ENCODE measurements at regions of chr16 and their contacts with region 1.

Region 1: DNA sequence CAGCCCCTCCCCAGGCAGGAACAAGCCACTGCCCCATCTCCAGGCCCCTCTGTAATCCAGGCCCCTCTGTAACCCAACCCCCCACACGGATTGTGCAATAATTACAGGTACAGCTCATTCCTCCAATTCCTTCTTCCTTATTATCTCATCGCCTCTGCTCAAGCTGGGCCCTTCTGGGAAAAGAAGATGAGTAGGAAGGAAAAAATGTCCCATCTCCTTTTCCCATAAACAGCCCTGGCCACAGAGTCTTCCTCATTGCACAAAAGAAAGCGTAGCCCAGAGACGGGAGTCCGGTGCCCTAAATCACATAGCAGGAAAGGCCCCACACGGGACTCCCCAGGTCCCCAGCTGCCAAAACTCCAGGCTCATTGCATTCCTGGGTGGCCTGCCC is 3.6 kb upstream of the LITAFD start:
- DNase-seq: no peak
- ATAC-seq: no peak
- H3K4me3 ChIP-seq: no peak overlapping the region
- H3K4me3 Mint-ChIP-seq: no peak overlapping the region
- H3K27ac ChIP-seq: no peak overlapping the region
- H3K27ac Mint-ChIP-seq: no peak overlapping the region
- H3K4me1 ChIP-seq: peaks cover 9% of the 10 kb centered on the region
- H3K4me1 Mint-ChIP-seq: peaks cover 19% of the 10 kb centered on the region
- H3K27me3 ChIP-seq: no peaks in the 10 kb centered on the region
- H3K27me3 Mint-ChIP-seq: no peaks in the 10 kb centered on the region
- CTCF ChIP-seq: no peak

Region 2: GRCh38 chr16:8567750-8568617 is 310.5 kb before region 1 on chr16:
- CTCF ChIA-PET with region 1: interaction called, 13 read pairs
- POLR2A ChIA-PET with region 1: no interaction called
- intact Hi-C with region 1: loop called (anchors 1 kb)
- DNase-seq: peak; percentile 49 to 86 (median 73)
- ATAC-seq: peak; percentile 97
- H3K4me3 ChIP-seq: no peak overlapping the region
- H3K4me3 Mint-ChIP-seq: no peak overlapping the region
- H3K27ac ChIP-seq: no peak overlapping the region
- H3K27ac Mint-ChIP-seq: no peak overlapping the region
- H3K4me1 ChIP-seq: no peaks in the 10 kb centered on the region
- H3K4me1 Mint-ChIP-seq: peaks cover 4% of the 10 kb centered on the region
- H3K27me3 ChIP-seq: no peaks in the 10 kb centered on the region
- H3K27me3 Mint-ChIP-seq: peaks cover 10% of the 10 kb centered on the region
- CTCF ChIP-seq: peak; percentile 98

Region 3: DNA sequence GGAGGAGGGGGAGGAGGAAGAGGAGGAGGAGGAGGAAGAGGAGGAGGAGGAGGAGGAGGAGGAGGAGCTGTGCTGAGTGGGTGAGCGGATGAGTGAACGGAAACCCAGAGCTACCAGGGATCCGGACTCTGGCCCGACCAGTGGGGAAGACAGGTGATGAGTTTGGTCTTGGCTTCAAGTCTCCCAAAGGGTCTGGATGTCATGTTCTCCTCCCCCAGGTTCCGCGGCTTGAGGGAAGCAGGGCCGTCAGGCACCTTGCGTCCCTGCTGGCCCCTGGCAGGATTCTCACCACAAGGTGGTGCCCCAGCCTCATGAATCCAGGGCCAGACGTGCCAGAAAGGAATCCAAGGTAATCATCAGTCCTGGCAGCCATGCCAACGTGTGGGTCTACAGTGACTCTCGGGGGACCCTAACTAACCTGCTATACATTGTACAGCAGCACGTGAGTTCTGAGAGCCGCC is 217.6 kb before region 1 on chr16:
- CTCF ChIA-PET with region 1: interaction called, 13 read pairs
- POLR2A ChIA-PET with region 1: no interaction called
- intact Hi-C with region 1: loop called (anchors 1 kb)
- DNase-seq: peak in 8 of 9 experiments; percentile 10 to 56 (median 32)
- ATAC-seq: peak; percentile 58
- H3K4me3 ChIP-seq: no peak overlapping the region
- H3K4me3 Mint-ChIP-seq: no peak overlapping the region
- H3K27ac ChIP-seq: no peak overlapping the region
- H3K27ac Mint-ChIP-seq: no peak overlapping the region
- H3K4me1 ChIP-seq: no peaks in the 10 kb centered on the region
- H3K4me1 Mint-ChIP-seq: no peaks in the 10 kb centered on the region
- H3K27me3 ChIP-seq: no peaks in the 10 kb centered on the region
- H3K27me3 Mint-ChIP-seq: no peaks in the 10 kb centered on the region
- CTCF ChIP-seq: peak; percentile 27

Region 4: GRCh38 chr16:8708536-8708935 is 170.0 kb before region 1 on chr16:
- CTCF ChIA-PET with region 1: no interaction called
- POLR2A ChIA-PET with region 1: no interaction called
- intact Hi-C with region 1: no loop called
- DNase-seq: no peak
- ATAC-seq: no peak
- H3K4me3 ChIP-seq: no peak overlapping the region
- H3K4me3 Mint-ChIP-seq: no peak overlapping the region
- H3K27ac ChIP-seq: no peak overlapping the region
- H3K27ac Mint-ChIP-seq: no peak overlapping the region
- H3K4me1 ChIP-seq: no peaks in the 10 kb centered on the region
- H3K4me1 Mint-ChIP-seq: peaks cover 3% of the 10 kb centered on the region
- H3K27me3 ChIP-seq: no peaks in the 10 kb centered on the region
- H3K27me3 Mint-ChIP-seq: no peaks in the 10 kb centered on the region
- CTCF ChIP-seq: no peak

Region 5: DNA sequence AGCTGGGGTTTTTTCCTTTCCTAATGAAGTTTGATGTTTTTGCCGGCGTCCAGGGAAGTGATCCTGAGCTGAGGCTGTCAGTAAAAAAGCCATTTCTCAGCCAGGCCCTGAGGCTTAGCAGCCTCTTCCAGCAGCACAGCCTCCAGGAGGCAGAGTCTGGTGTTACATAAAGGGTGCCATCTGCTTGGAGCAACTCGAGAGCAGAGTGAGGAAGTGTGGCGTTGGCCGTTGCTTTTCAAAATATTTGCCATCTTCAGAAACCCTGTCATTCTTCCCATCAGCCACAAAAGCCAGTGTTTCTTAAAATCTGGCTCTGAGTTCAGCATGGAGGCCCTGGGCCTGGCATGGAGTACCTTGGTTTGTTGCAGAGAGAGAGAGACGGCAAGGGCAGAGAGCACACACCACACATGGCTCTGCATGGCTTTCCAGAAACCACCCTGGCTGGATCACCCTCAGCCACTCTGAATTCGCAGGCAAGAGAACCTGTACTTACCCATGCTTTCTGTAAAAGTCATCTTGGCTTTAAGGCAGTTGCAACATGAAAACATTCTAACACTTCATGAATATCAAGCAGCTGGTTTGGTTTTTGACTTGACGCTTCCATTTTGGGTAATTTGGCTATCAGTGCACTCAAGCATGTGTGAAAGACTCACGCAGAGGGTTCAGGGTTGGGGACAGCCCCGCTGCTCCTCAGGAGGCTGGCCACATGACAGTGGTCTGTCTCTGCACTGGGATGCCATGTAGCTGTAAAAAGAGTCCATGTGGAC is 59.8 kb before region 1 on chr16:
- CTCF ChIA-PET with region 1: interaction called, 19 read pairs
- POLR2A ChIA-PET with region 1: no interaction called
- intact Hi-C with region 1: no loop called
- DNase-seq: no peak
- ATAC-seq: no peak
- H3K4me3 ChIP-seq: no peak overlapping the region
- H3K4me3 Mint-ChIP-seq: no peak overlapping the region
- H3K27ac ChIP-seq: no peak overlapping the region
- H3K27ac Mint-ChIP-seq: no peak overlapping the region
- H3K4me1 ChIP-seq: peaks cover 12% of the 10 kb centered on the region
- H3K4me1 Mint-ChIP-seq: peaks cover 22% of the 10 kb centered on the region
- H3K27me3 ChIP-seq: no peaks in the 10 kb centered on the region
- H3K27me3 Mint-ChIP-seq: no peaks in the 10 kb centered on the region
- CTCF ChIP-seq: no peak

Region 6: DNA sequence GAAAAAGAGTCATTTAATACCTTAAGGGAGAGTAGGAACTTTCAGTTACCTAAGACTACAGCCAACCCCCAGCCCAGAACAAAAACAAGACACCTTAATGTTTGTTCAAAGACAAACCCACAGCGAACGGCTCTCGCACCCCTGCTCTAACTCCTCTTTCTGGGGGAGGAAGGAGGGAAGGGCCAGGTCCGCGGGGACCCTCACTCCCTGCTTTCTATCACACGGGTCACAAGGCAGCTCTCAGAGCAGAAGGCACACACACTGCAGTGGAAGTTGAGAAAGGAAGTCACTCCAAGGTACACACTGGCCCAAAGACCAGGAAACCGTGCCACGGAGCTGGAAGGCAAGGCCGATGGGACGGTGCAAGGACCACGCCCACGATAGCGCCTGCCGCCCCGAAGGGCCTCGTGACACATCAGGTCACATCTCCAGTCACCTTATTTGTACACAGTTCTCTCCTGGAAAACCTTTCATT is 13.6 kb after region 1 on chr16:
- CTCF ChIA-PET with region 1: interaction called, 10 read pairs
- POLR2A ChIA-PET with region 1: no interaction called
- intact Hi-C with region 1: no loop called
- DNase-seq: peak in 1 of 9 experiments; percentile 33
- ATAC-seq: no peak
- H3K4me3 ChIP-seq: no peak overlapping the region
- H3K4me3 Mint-ChIP-seq: peak overlapping the region; percentile 26
- H3K27ac ChIP-seq: peak overlapping the region in 1 of 2 experiments; percentile 31
- H3K27ac Mint-ChIP-seq: peak overlapping the region; percentile 87
- H3K4me1 ChIP-seq: no peaks in the 10 kb centered on the region
- H3K4me1 Mint-ChIP-seq: peaks cover 12% of the 10 kb centered on the region
- H3K27me3 ChIP-seq: no peaks in the 10 kb centered on the region
- H3K27me3 Mint-ChIP-seq: no peaks in the 10 kb centered on the region
- CTCF ChIP-seq: no peak

Region 7: DNA sequence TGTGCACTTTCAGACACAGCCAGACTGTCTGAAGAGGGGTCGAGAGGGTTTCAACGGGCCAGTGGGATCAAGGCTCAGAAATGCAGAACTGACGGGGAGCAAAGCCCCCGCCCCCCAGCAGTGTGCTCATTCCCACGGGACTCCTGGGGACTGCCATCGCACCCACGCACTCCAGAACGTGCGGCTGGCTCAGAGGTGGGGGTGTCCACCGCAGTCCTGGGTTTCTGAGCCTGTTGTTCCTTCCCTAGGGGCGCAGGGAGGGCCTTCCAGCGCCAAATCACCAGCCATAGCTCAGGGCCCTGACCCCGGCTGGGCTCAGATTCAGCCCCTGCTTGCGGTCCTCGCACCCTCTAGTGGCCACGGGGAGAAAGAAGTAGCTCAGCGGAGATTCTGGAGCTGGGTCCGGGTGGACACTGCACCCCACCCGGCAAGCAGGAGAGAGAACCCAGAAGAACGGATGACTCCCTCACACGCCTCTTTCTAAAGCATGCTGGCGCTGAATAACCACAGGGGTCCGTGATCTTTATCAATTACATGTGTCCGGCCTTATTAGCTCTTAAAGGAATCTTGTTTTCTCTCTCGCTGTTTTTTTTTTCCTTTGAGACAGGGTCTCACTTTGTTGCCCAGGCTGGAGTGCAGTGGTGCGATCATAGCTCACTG is 130.2 kb after region 1 on chr16:
- CTCF ChIA-PET with region 1: interaction called, 14 read pairs
- POLR2A ChIA-PET with region 1: no interaction called
- intact Hi-C with region 1: no loop called
- DNase-seq: peak; percentile 44 to 78 (median 69)
- ATAC-seq: peak; percentile 84
- H3K4me3 ChIP-seq: no peak overlapping the region
- H3K4me3 Mint-ChIP-seq: peak overlapping the region; percentile 29
- H3K27ac ChIP-seq: no peak overlapping the region
- H3K27ac Mint-ChIP-seq: no peak overlapping the region
- H3K4me1 ChIP-seq: peaks cover 9% of the 10 kb centered on the region
- H3K4me1 Mint-ChIP-seq: peaks cover 3% of the 10 kb centered on the region
- H3K27me3 ChIP-seq: peaks cover 0 to 3% of the 10 kb centered on the region in 2 experiments
- H3K27me3 Mint-ChIP-seq: peaks cover 21% of the 10 kb centered on the region
- CTCF ChIP-seq: peak; percentile 73